Psoas muscle (tissue), 8 donors: ENCODE measurements at regions of chr14 and their contacts with region 1.

Region 1: GRCh38 chr14:78022059-78022458 is 148.1 kb upstream of the NRXN3 start:
- DNase-seq: peak; percentile 27 to 59
- ATAC-seq: peak in 3 of 4 donors; percentile 52 to 68 (median 62)
- H3K4me3 ChIP-seq: no peak overlapping the region
- H3K27ac ChIP-seq: no peak overlapping the region
- H3K4me1 ChIP-seq: no peaks in the 10 kb centered on the region
- H3K27me3 ChIP-seq: peaks cover 0 to 6% (median 0%) of the 10 kb centered on the region in 3 donors
- CTCF ChIP-seq: peak; percentile 50

Region 2: DNA sequence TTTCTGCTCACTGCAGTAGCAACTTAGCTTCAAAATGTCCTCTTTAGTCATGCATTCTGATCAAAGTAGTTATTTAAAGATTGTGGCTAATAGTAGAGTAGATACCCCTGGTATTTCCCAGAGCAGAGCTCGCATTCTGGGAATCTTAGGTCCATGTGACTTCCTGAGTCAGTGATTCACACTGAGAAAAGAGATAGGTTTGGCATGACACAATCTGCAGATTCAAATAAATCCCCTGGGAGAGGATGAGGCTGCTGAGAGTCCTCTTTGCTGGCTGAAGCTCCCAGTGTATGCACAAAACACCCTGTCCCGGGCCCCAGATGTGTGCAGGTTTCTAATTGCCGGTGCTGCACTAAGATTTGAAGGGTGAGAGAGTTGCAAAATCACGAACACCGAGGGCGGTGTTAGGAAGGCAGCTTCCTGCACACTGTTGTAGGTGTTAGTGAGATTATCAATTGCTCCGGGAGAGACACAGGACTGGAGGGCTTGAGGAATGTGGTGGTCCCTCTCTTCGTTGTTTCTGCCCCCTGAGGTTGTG is 381.3 kb after region 1 on chr14:
- intact Hi-C with region 1: no loop called
- DNase-seq: no peak
- ATAC-seq: no peak
- H3K4me3 ChIP-seq: no peak overlapping the region
- H3K27ac ChIP-seq: no peak overlapping the region
- H3K4me1 ChIP-seq: no peaks in the 10 kb centered on the region
- H3K27me3 ChIP-seq: peaks cover 6 to 19% (median 8%) of the 10 kb centered on the region in 3 donors
- CTCF ChIP-seq: no peak

Region 3: DNA sequence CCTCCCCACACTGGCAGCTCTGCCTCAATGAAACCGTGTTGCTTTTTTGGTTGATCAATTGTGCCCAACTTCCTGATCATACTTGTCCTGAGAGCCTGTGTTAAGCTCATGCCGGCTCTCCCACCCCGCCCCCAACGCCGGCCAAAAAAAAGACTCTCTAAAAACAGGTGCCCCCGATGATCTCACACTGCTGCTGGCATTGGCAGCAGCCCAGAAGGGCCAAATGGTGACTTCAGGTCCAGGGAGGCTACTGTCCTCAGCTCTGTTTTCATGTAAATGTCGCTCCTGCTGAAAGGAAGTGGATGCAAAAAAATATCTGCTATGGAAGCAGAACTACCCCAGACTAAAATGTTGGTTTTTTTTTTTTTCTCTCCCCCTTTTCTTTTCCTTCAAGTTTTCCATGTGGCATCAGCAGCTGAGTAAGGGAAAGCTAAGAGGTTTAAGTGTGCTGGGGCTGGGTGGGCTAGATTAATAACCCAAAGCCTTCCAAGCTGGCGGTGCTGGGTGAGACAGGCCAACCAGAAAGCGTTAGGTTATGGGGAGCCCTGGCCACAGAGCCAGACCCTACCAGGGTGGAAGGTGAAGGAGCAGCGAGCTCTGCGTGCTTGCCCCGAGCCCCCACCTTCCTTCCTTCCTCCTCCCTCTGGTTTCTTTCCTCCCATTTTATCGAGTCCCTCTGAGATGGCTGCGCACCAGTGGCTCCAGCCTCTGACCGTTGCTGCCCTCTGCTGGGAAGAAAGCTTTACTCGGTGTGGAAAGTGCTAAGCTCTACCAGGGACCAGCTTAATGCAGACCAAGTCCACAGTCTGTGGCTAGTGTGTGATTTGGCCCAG is 544.2 kb after region 1 on chr14:
- intact Hi-C with region 1: loop called in 1 of 2 experiments (anchors 10 kb)
- DNase-seq: peak; percentile 67 to 82
- ATAC-seq: peak; percentile 92 to 99 (median 98)
- H3K4me3 ChIP-seq: peak overlapping the region; percentile 61
- H3K27ac ChIP-seq: peak overlapping the region; percentile 73
- H3K4me1 ChIP-seq: no peaks in the 10 kb centered on the region
- H3K27me3 ChIP-seq: no peaks in the 10 kb centered on the region
- CTCF ChIP-seq: peak; percentile 75